Sciatic nerve (tissue), 2 donors: ENCODE measurements at regions of chr18 and their contacts with region 1.

Region 1: DNA sequence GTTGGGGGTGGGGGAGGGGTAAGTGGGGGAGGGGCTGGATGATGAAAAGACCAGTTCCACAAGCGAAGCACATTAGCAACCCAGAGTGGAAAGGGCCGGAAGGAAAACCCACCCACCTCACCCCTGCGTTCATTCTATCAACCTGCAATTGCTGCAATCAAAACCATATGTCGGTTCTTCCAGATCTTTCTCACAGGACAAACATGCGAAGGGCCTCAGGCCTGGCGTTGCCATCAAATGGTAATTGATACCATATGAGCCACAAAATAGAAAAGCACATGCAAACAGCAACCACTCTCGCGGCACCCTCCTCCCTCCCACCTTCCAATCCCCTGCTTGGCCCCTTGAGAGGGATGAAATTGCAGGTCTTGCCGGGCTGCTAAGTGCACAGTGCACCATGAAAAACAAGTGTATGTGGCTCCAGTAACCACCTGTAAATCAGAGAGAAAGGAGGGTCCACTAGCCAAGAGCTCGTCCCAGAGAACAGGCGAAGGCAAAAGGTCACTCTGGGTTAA is 287.5 kb downstream of the TCF4 start:
- DNase-seq: peak; percentile 54
- ATAC-seq: peak; percentile 60

Region 2: DNA sequence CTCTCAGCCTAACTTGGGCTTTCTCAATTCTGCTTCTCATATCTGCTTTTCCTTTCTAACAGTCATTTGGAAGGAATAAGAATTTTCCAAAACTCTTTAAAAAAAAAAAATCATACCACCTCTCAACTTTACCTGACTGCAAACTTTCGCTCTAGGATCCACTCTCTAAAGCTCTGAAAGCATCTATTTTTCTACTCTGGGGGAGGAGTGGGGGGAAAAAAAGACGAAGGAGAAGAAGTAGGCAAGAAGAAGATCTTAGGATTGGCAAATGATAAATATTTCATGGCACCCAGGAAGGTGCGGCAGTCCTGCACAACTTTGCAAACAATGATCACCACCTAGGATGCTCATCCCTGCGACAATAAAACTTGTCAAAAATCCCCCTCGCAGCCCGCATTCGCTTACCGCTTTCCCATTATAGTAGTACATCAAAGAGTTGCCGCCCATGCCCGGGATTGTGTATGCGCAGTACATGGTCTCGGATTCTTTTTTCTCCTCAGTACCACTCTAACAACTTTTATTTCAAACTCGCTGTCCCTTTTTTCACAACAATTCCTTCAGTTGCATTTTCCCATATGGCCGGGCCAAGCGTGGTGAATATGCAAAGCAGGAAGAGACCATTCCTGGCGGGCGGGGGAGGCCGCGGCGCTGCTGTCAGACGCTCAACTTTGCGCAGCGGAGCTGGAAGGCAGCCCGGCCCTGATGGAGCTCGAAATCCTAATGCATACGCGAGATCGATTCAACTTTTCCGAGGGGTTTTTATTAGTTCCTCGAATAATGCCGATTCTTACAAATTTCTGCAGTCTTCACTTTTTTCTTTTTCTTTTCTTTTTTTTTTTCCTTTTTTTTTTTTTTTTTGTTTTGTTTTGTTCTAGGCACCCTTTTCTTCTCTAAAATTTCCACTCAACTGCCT is 21.0 kb after region 1 on chr18:
- intact Hi-C with region 1: loop called (anchors 1 kb)
- DNase-seq: peak; percentile 94
- ATAC-seq: peak; percentile 93

Region 3: GRCh38 chr18:55605733-55606338 is 305.4 kb after region 1 on chr18:
- intact Hi-C with region 1: no loop called
- DNase-seq: no peak
- ATAC-seq: no peak